ENCODE measurements at regions of chr21 and their contacts with region 1.

Region 1: DNA sequence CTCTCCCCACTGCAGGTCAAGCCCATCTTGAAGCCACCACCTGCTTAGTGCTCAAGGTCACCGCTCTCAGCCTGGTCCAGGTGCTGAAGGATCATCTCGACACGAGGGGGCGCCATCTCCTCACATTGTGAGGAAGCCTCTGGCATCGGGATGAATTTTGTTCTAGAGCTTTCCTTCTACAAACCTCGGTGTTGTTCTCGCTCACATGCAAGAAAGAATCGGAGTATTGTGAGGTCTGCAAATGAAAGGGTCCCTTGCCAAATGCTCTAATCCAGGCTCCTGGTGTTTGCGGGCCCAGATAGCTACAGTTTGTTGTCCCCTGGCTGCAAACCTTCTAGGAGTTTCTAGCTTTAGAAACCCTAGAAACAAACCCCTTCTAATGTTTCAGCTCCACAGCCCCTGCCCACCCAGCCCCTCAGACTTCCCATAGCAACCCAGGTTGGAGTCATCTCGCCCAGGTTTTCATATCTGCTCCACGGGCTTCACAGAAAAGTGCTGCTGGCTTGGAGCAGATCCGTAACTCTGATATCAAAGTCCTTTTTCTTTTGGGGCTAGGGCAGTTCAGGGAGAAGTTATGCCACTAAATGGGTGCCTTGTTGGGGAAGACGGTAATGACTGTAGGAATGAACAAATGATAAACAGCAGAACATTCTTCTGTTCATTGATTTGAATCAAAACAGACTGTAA is 8.6 kb upstream of the ATP5PO start:
- DNase-seq: peak; percentile 96
- H3K4me3 Mint-ChIP-seq: no peak overlapping the region
- H3K27ac Mint-ChIP-seq: peak overlapping the region; percentile 24
- H3K4me1 Mint-ChIP-seq: peaks cover 10% of the 10 kb centered on the region
- H3K27me3 Mint-ChIP-seq: no peaks in the 10 kb centered on the region

Region 2: GRCh38 chr21:33940164-33940880 is 16.1 kb after region 1 on chr21:
- CTCF ChIA-PET with region 1: interaction called, 21 read pairs
- intact Hi-C with region 1: no loop called
- DNase-seq: no peak
- H3K4me3 Mint-ChIP-seq: no peak overlapping the region
- H3K27ac Mint-ChIP-seq: peak overlapping the region; percentile 75
- H3K4me1 Mint-ChIP-seq: peaks cover 75% of the 10 kb centered on the region
- H3K27me3 Mint-ChIP-seq: no peaks in the 10 kb centered on the region

Region 3: DNA sequence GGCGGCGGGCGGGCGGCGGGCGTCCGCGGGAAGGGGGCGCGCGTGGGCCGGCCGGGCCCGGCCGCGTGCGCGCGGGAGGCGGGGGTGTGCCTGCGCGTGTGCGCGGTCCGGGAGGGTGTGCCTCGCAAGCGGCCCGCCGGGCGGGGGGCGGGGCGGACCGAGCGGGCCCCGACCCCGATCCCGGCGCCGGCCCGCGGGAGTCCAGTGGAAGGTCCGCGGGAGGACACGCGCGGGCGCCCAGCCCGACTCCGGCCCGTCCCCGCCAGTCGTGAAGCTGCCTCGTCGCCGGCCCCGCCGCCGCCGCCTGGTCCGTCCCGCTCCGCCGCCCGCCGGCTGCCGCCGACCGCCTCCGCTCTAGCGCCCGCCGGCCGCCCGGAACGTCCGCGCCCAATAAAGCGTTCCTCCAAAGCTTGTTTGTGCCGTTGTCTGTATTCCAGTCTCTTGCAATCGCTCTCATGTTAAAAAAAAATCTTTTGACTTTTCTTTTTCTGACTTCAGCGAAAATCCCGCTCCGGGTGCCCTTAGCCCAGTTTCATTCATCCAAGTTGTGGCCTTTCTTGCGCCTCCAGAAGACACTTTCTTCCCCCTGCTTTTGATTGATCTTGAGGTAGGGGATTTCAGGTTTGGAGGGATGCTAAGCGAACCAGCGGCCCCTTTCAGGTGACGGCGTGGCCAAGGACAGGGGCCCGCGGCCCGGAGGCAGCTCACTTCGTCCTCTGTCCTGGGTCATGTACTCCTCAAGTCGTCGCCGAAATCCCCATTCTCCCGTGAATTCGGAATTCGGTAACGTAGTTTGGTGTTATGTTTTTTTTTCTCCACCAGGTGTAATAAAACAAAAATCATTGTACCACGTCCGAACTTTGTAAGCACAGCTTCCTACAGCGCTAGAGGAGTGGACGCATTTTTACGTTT is 149.9 kb after region 1 on chr21:
- CTCF ChIA-PET with region 1: interaction called, 23 read pairs
- intact Hi-C with region 1: no loop called
- DNase-seq: peak; percentile 24
- H3K4me3 Mint-ChIP-seq: peak overlapping the region; percentile 88
- H3K27ac Mint-ChIP-seq: peak overlapping the region; percentile 86
- H3K4me1 Mint-ChIP-seq: peaks cover 46% of the 10 kb centered on the region
- H3K27me3 Mint-ChIP-seq: no peaks in the 10 kb centered on the region

Region 4: GRCh38 chr21:34141373-34141772 is 217.2 kb after region 1 on chr21:
- CTCF ChIA-PET with region 1: interaction called, 12 read pairs
- intact Hi-C with region 1: no loop called
- DNase-seq: no peak
- H3K4me3 Mint-ChIP-seq: no peak overlapping the region
- H3K27ac Mint-ChIP-seq: no peak overlapping the region
- H3K4me1 Mint-ChIP-seq: peaks cover 18% of the 10 kb centered on the region
- H3K27me3 Mint-ChIP-seq: no peaks in the 10 kb centered on the region

Region 5: GRCh38 chr21:34235514-34235913 is 311.3 kb after region 1 on chr21:
- CTCF ChIA-PET with region 1: interaction called, 10 read pairs
- intact Hi-C with region 1: no loop called
- DNase-seq: no peak
- H3K4me3 Mint-ChIP-seq: no peak overlapping the region
- H3K27ac Mint-ChIP-seq: no peak overlapping the region
- H3K4me1 Mint-ChIP-seq: no peaks in the 10 kb centered on the region
- H3K27me3 Mint-ChIP-seq: no peaks in the 10 kb centered on the region

Region 6: GRCh38 chr21:34336756-34337391 is 412.7 kb after region 1 on chr21:
- CTCF ChIA-PET with region 1: interaction called, 168 read pairs
- intact Hi-C with region 1: no loop called
- DNase-seq: no peak
- H3K4me3 Mint-ChIP-seq: no peak overlapping the region
- H3K27ac Mint-ChIP-seq: no peak overlapping the region
- H3K4me1 Mint-ChIP-seq: no peaks in the 10 kb centered on the region
- H3K27me3 Mint-ChIP-seq: no peaks in the 10 kb centered on the region